CD8-positive, alpha-beta T cell (primary cell): ENCODE measurements at regions of chr15 and their contacts with region 1.

Region 1: GRCh38 chr15:55179141-55179540 is 17.6 kb downstream of the RSL24D1 start:
- DNase-seq: no peak
- ATAC-seq: no peak
- H3K4me3 ChIP-seq: no peak overlapping the region
- H3K4me3 Mint-ChIP-seq: no peak overlapping the region
- H3K27ac ChIP-seq: no peak overlapping the region
- H3K27ac Mint-ChIP-seq: no peak overlapping the region
- H3K4me1 ChIP-seq: no peaks in the 10 kb centered on the region
- H3K4me1 Mint-ChIP-seq: peaks cover 4% of the 10 kb centered on the region
- H3K27me3 ChIP-seq: no peaks in the 10 kb centered on the region
- H3K27me3 Mint-ChIP-seq: no peaks in the 10 kb centered on the region
- CTCF ChIP-seq: no peak

Region 2: DNA sequence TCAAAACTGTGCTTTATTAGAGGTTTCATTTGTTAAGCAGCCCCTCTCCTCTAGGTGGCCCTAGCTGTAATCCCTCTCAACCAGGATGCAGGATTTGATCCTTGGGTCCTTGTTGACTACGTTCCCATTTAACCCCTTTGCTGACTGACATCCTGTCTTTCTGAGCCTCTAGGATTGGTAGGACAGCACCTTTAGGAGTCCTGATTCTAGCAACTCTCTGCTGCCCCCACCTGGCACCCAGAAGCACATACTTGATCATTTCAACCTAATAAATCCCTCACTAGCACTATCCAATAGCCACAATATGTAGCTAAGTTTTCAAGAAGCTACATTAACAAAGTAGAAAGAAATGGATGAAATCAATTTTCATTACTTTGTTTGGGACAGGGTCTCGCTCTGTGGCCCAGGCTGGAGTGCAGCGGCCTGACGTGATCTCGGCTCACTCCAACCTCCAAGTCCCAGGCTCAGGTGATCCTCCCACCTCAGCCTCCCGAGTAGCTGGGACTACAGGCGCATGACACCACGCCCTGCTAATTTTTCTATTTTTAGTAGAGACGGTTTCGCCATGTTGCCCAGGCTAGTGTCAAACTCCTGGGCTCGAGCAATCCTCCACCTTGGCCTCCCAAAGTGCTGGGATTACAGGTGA is 10.7 kb before region 1 on chr15:
- CTCF ChIA-PET with region 1: interaction called, 10 read pairs
- POLR2A ChIA-PET with region 1: no interaction called
- intact Hi-C with region 1: no loop called
- DNase-seq: peak; percentile 9 to 63 (median 46)
- ATAC-seq: peak; percentile 64
- H3K4me3 ChIP-seq: no peak overlapping the region
- H3K4me3 Mint-ChIP-seq: no peak overlapping the region
- H3K27ac ChIP-seq: no peak overlapping the region
- H3K27ac Mint-ChIP-seq: no peak overlapping the region
- H3K4me1 ChIP-seq: no peaks in the 10 kb centered on the region
- H3K4me1 Mint-ChIP-seq: no peaks in the 10 kb centered on the region
- H3K27me3 ChIP-seq: no peaks in the 10 kb centered on the region
- H3K27me3 Mint-ChIP-seq: no peaks in the 10 kb centered on the region
- CTCF ChIP-seq: peak; percentile 77